Left cardiac atrium (tissue), 4 donors: ENCODE measurements at regions of chr7 and their contacts with region 1.

Region 1: DNA sequence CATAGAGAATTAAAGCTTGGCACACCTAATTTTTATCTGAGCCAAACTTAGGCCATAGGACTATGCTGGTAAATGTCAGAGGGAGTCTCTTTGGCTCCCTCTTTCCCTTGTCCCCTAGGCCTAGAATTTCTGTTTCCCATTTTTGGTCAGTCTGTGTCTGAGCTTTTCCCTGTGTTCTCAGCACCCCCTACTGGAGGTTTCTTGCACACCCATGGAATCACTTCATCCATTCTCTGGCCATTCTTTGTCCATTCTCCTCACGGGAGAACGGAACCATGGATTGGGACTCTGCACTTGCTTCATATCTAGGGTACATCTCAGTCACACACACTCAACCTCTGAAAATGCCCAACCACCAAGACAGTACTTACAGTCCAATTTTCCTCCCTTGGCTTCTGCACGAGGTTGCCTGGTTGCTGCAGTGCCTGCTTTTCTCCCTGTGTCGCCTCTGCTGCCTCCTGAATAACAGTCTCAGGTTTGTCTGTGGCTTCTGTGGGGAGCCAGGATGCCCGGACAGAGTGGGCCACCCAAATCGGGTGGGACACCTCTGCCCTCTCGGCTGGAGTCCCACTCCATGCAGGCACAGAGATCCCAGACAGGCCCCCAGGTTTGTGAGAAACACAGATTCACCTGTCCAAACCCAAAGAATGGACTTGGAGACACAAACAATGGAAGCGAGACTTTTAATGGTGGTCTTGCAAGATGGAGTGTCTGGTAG is 35.1 kb upstream of the DNAH11 start:
- DNase-seq: no peak
- ATAC-seq: peak; percentile 57 to 61

Region 2: GRCh38 chr7:20778063-20778721 is 729.6 kb before region 1 on chr7:
- intact Hi-C with region 1: loop called in 1 of 2 experiments (anchors 10 kb)
- DNase-seq: peak; percentile 32
- ATAC-seq: peak; percentile 95 to 96

Region 3: GRCh38 chr7:21365866-21366624 is 141.7 kb before region 1 on chr7:
- intact Hi-C with region 1: no loop called
- DNase-seq: no peak
- ATAC-seq: no peak